BJ (cell line): ENCODE measurements at regions of chr11 and their contacts with region 1.

Region 1: GRCh38 chr11:76207642-76208401 is 1.5 kb upstream of the WNT11 start:
- DNase-seq: no peak
- H3K4me3 ChIP-seq: peak overlapping the region; percentile 39
- H3K27me3 ChIP-seq: peaks cover 58% of the 10 kb centered on the region
- CTCF ChIP-seq: peak; percentile 76

Region 2: GRCh38 chr11:76185931-76186401 is 21.9 kb before region 1 on chr11:
- CTCF ChIA-PET with region 1: interaction called, 27 read pairs
- POLR2A ChIA-PET with region 1: no interaction called
- DNase-seq: no peak
- H3K4me3 ChIP-seq: no peak overlapping the region
- H3K27me3 ChIP-seq: peaks cover 2% of the 10 kb centered on the region
- CTCF ChIP-seq: no peak

Region 3: DNA sequence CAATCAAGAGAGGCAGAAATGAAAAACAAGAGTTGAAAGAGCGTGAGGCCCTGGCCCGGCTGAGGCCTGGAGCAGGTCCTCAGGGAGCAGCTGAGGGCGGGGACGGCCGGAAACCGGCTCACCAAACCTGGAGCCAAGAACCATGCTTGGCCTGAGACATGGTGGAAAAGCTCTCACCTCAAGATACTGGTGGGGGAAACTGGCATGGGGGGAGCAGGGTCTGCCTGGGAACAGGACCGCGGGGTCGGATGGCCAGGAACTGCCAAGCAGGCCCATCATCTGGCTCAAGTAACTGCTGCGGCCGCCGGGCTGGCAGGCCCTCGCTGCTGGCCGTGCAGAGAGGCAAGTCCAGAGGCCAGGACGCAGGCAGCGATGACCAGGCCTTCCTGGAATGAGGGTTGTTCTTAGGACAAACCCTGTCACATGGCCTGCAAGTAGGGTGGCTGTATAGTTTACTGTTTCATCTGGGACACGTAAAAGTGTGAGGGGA is 17.3 kb after region 1 on chr11:
- CTCF ChIA-PET with region 1: interaction called, 13 read pairs
- POLR2A ChIA-PET with region 1: interaction called, 3 read pairs
- DNase-seq: no peak
- H3K4me3 ChIP-seq: no peak overlapping the region
- H3K27me3 ChIP-seq: no peaks in the 10 kb centered on the region; the same call in 1 of the 2 replicates
- CTCF ChIP-seq: no peak

Region 4: GRCh38 chr11:76318744-76319384 is 111.0 kb after region 1 on chr11:
- CTCF ChIA-PET with region 1: interaction called, 135 read pairs
- POLR2A ChIA-PET with region 1: interaction called, 3 read pairs
- DNase-seq: no peak
- H3K4me3 ChIP-seq: no peak overlapping the region
- H3K27me3 ChIP-seq: peaks cover 17% of the 10 kb centered on the region
- CTCF ChIP-seq: peak; percentile 92